ENCODE measurements at regions of chr11 and their contacts with region 1.

Region 1: GRCh38 chr11:94973099-94973968 is at the starts of genes CWC15 and KDM4D:
- DNase-seq: peak; percentile 91
- H3K4me3 Mint-ChIP-seq: peak within 1 kb of the TSS; percentile 96
- H3K27ac Mint-ChIP-seq: peak within 1 kb of the TSS; percentile 96
- H3K4me1 Mint-ChIP-seq: peaks cover 43% of the 10 kb centered on the region
- H3K27me3 Mint-ChIP-seq: no peaks in the 10 kb centered on the region
- total RNA-seq, gene CWC15: 97.7 and 101 TPM in 2 replicates
- total RNA-seq, gene KDM4D: 1.1 TPM in 2 replicates

Region 2: DNA sequence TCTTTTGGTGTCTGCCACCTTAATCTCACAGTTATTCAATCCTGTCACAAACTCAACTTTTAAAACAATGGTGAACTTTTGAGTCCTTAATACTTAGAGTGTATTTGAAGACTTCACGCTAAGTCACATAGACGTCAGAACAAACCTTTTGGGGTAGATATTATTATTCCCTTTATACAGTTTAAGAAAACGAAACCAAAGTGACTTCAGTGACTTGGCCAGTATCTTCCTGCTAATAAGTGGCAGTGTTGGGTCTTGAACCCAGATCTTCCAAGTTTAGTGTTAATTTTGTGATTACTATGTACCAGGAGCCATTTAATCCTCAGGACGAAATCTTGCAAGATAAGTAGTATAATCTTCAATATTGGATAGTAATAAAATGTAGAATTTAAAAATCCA is 1311.2 kb before region 1 on chr11:
- intact Hi-C with region 1: loop called (anchors 5 kb)
- DNase-seq: no peak
- H3K4me3 Mint-ChIP-seq: peak overlapping the region; percentile 89
- H3K27ac Mint-ChIP-seq: peak overlapping the region; percentile 86
- H3K4me1 Mint-ChIP-seq: peaks cover 47% of the 10 kb centered on the region
- H3K27me3 Mint-ChIP-seq: no peaks in the 10 kb centered on the region

Region 3: DNA sequence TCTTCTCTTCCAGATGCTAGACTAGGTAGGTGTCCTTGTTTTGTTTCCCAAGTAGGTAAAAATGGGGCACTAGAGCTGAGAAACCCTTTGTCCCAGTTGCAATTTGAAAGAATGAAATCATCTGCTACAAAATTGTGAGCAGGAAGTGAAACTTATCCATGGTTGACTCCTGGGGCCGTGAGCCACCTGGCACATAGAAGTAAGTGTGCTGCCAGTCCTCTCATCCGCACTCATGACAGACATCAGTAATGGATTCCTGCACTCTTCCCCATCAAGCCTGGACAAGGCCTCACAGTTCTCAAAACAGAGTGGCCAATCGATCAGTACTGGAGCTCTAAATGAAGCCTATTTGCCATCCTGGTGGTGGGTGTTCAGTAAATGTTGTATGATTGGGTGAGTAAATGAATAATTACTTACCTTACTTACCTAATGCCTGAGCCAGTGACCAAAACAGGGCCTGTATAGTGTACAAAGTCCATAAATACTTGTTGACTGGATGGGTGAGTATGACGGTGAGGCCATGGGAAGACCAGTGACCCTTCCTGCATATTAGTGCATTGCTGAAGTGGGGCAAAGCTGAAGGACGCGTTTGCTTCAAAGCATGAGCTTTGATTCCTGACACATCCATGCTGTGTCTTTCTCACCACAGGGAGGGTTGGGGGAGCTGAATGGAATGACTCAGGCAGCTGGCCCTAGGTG is 1021.1 kb before region 1 on chr11:
- intact Hi-C with region 1: no loop called
- DNase-seq: no peak
- H3K4me3 Mint-ChIP-seq: no peak overlapping the region
- H3K27ac Mint-ChIP-seq: no peak overlapping the region
- H3K4me1 Mint-ChIP-seq: no peaks in the 10 kb centered on the region
- H3K27me3 Mint-ChIP-seq: no peaks in the 10 kb centered on the region

Region 4: GRCh38 chr11:94128746-94129511 is 844.4 kb before region 1 on chr11 and contains the start of gene PANX1:
- intact Hi-C with region 1: loop called (anchors 2 kb)
- DNase-seq: peak; percentile 73
- H3K4me3 Mint-ChIP-seq: no peak within 1 kb of the TSS
- H3K27ac Mint-ChIP-seq: peak within 1 kb of the TSS; percentile 88
- H3K4me1 Mint-ChIP-seq: peaks cover 20% of the 10 kb centered on the region
- H3K27me3 Mint-ChIP-seq: no peaks in the 10 kb centered on the region
- total RNA-seq, gene PANX1: 20.8 and 21.9 TPM in 2 replicates

Region 5: GRCh38 chr11:94623120-94623735 is 350.1 kb before region 1 on chr11:
- intact Hi-C with region 1: loop called (anchors 10 kb)
- DNase-seq: peak; percentile 27
- H3K4me3 Mint-ChIP-seq: no peak overlapping the region
- H3K27ac Mint-ChIP-seq: no peak overlapping the region
- H3K4me1 Mint-ChIP-seq: no peaks in the 10 kb centered on the region
- H3K27me3 Mint-ChIP-seq: peaks cover 7% of the 10 kb centered on the region

Region 6: DNA sequence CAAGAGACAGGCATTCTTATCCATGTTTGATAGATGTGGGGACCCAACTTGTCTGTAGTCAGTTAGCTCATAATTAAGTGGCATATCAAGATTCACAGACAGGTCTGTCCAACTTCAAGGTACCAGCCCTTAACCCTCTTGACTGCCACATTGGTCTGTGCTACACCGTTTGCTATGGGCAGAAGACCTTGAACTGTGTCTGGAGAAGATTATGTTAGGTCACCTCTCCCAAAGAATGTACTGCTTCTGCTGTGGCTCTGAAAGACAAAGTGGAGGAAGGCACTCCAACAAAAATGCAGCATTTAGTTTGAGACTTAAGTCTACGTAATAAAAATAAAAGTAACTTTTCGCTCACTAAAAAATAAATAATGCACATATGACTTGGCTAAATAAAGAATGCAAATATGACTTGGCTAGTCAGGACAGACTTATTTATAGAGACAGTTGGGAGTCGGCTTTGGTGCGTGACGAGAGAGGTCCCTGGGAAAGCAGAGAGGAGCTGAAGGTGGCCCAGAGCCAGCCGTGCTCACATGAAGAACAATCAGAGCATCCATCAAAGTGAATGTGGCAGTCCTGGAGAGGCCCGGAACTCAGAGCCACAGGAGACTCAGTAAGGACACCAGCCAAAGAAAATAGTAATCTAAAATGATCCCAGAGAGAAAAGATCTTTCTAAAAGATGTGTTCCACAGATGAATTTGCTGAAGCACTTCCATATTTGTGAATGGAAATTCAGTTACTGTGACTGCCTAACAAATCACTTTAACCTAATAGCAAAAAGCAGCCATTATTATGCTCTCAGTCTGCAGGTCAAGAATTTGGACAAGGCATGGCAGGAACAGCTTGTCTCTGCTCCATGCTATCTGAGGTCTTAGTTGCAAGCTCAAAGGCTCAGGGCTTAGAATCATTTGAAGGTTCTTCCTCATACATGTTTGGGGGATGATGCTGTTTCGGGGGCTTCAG is 35.0 kb before region 1 on chr11:
- intact Hi-C with region 1: no loop called
- DNase-seq: no peak
- H3K4me3 Mint-ChIP-seq: no peak overlapping the region
- H3K27ac Mint-ChIP-seq: no peak overlapping the region
- H3K4me1 Mint-ChIP-seq: peaks cover 12% of the 10 kb centered on the region
- H3K27me3 Mint-ChIP-seq: peaks cover 11% of the 10 kb centered on the region

Region 7: GRCh38 chr11:95067039-95067840 is 93.9 kb after region 1 on chr11:
- intact Hi-C with region 1: loop called (anchors 1 kb)
- DNase-seq: peak; percentile 72
- H3K4me3 Mint-ChIP-seq: peak overlapping the region; percentile 95
- H3K27ac Mint-ChIP-seq: peak overlapping the region; percentile 96
- H3K4me1 Mint-ChIP-seq: peaks cover 28% of the 10 kb centered on the region
- H3K27me3 Mint-ChIP-seq: peaks cover 23% of the 10 kb centered on the region

Region 8: GRCh38 chr11:95078526-95078925 is 105.2 kb after region 1 on chr11:
- intact Hi-C with region 1: no loop called
- DNase-seq: no peak
- H3K4me3 Mint-ChIP-seq: no peak overlapping the region
- H3K27ac Mint-ChIP-seq: no peak overlapping the region
- H3K4me1 Mint-ChIP-seq: peaks cover 41% of the 10 kb centered on the region
- H3K27me3 Mint-ChIP-seq: no peaks in the 10 kb centered on the region

Region 9: GRCh38 chr11:95150946-95151684 is 177.8 kb after region 1 on chr11:
- intact Hi-C with region 1: loop called (anchors 1 kb)
- DNase-seq: peak; percentile 87
- H3K4me3 Mint-ChIP-seq: peak overlapping the region; percentile 87
- H3K27ac Mint-ChIP-seq: peak overlapping the region; percentile 78
- H3K4me1 Mint-ChIP-seq: peaks cover 46% of the 10 kb centered on the region
- H3K27me3 Mint-ChIP-seq: peaks cover 6% of the 10 kb centered on the region

Region 10: DNA sequence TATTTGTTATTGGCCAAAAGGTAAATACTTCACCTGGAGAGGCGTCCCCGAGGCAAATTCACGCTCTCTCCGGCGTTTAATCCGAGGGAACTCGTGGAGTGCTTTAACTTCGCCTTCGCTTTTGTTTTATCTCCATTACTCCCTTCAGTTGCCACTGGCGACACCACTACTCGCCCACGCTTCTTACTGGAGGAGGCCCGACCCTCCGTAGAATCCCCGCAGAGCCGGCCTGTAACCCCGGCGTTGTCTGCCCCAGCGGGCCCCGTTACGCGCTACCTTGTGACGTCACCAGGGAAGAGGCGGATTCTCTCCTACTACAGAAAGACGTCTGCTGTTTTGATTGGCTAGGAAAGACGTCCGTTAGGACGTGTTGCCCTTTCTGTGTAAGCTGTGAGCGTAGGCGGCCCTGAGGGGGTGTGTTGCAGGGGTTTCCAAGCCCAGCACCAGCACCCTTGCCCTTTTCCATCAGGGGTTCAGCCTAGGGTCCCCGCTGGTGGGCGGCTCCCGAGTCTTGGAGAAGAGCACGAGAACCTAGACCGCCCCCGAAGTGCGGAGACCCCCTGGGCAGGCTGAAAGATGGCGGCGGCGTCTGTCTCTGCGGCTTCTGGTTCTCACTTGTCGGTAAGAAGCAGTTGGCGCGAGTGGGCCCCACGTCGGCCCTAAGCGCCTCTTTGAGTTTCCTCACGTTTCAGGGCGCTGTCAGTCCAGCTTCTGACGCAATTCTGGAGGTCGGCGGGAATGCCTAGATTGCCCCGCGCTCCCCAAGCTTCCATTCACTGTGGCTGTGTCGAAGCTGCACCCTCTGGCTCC is 817.0 kb after region 1 on chr11 and contains the start of gene CEP57:
- intact Hi-C with region 1: loop called (anchors 1 kb)
- DNase-seq: peak; percentile 93
- H3K4me3 Mint-ChIP-seq: peak within 1 kb of the TSS; percentile 96
- H3K27ac Mint-ChIP-seq: peak within 1 kb of the TSS; percentile 100
- H3K4me1 Mint-ChIP-seq: peaks cover 70% of the 10 kb centered on the region
- H3K27me3 Mint-ChIP-seq: no peaks in the 10 kb centered on the region
- total RNA-seq, gene CEP57: 77.1 and 77.7 TPM in 2 replicates